Posterior cingulate gyrus (tissue), 11 donors: ENCODE measurements at regions of chr7 and their contacts with region 1.

Region 1: GRCh38 chr7:33062782-33063443 is 337 bp upstream of the NT5C3A start:
- DNase-seq: peak; percentile 88 to 99 (median 92)

Region 2: DNA sequence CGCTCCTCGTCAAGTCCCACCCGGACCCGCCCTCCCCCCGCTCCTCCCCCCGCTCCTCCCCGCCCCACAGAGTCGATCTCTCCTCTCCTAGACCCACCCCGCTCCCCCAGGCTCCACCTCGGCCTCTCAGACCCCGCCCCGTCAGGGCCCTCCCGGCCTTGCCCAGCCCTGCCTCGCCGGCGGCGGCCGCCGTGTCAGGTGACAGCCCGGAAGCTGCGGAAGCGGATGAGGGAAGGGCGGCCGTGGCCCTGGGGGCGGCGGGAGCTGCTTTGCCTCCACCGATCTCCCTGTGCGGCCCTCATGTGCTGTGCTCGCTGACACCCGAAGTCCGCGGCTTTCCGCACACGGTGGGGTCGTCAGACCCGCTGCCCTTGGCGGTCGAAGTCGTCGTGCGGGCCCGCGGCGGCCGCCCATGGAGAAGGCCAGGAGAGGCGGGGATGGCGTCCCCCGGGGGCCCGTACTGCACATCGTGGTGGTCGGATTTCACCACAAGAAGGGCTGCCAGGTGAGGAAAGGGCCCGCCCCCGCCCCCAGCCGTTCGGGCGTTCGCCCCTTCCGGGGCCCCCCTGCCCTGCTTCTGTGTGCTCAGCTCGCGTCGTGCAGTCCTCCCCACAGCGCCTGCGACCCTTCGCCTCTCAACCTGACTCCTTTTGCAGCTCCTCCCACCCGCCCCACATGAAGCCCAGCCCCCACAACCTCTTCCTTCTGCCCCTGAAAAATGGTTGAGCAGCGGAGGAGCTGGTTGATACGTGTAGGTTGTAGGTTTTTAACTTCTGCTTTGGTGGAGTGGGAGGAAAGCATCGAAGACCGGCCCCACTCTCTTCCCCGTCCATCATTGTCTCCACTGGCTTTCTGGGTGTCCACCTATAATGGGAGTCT is 567.4 kb before region 1 on chr7 and contains the start of gene AVL9:
- intact Hi-C with region 1: loop called (anchors 5 kb)
- DNase-seq: peak; percentile 94 to 100 (median 98)

Region 3: DNA sequence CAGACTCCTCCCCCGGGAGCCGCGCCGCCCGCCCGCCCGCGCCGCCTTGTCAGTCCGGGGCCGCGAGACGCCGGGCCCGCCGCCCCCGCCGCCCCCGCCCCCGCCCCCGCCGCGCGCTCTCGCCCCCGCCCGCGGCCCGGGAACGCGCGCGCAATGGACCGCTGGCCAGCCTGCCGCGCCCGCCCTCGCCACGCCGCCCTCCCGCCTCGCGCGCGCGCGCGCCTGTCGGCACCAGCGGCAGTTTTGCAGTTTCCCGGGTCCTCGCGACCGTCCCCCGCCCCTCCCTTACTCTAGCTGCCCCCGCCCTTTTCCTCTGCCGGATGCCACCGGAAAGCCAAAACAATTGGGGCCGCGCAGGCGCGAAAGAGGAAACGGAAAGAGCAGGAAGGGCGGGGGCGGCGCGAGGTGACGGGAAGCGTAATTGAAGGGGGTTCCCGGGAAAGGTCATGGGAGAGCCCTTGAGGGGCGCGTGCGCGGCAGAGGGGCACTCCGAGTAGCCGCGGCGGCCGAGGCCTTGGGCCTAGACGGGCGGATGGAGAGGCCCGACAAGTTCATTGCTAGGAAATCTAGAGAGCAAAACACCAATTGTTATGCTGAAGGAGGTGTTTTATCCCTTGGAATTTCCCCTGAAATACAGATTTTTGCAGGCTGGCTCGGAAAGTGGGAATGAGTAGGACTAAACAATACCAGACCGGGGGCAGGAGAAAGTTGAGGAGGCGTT is 171.0 kb before region 1 on chr7:
- intact Hi-C with region 1: loop called (anchors 5 kb)
- DNase-seq: peak; percentile 93 to 99 (median 94)

Region 4: GRCh38 chr7:32942786-32943653 is 119.9 kb before region 1 on chr7:
- intact Hi-C with region 1: loop called (anchors 2 kb)
- DNase-seq: peak; percentile 68 to 97 (median 78)

Region 5: DNA sequence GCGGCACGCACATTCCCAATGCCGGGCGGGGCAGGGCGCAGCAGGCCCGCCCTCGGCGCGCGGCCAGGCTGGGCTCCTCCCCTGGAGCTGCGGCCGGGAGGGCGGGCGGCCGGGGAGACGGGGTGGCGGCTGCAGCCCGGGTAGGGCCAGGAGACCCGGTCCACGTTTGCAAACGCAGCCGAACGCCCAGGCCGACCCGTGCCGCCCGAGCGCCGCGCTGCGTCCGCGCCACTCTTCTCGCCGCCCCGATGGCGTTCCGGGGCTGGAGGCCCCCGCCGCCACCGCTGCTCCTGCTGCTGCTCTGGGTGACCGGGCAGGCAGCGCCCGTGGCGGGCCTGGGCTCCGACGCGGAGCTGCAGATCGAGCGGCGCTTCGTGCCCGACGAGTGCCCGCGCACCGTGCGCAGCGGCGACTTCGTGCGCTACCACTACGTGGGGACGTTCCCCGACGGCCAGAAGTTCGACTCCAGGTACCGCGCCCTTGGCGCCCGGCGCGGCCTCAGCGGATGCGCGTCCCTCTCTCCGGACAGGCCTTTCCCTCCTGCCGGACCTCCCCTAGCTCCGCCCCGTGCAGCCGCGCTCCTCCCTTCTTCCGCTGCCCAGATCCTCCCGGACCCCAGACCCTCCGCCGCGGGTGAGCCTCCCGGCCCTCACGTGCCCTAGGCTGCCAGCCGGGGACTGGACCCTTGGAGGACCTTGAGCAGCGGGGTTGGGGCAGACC is 105.4 kb before region 1 on chr7 and contains the start of gene FKBP9:
- intact Hi-C with region 1: loop called (anchors 5 kb)
- DNase-seq: peak; percentile 51 to 96 (median 70)

Region 6: DNA sequence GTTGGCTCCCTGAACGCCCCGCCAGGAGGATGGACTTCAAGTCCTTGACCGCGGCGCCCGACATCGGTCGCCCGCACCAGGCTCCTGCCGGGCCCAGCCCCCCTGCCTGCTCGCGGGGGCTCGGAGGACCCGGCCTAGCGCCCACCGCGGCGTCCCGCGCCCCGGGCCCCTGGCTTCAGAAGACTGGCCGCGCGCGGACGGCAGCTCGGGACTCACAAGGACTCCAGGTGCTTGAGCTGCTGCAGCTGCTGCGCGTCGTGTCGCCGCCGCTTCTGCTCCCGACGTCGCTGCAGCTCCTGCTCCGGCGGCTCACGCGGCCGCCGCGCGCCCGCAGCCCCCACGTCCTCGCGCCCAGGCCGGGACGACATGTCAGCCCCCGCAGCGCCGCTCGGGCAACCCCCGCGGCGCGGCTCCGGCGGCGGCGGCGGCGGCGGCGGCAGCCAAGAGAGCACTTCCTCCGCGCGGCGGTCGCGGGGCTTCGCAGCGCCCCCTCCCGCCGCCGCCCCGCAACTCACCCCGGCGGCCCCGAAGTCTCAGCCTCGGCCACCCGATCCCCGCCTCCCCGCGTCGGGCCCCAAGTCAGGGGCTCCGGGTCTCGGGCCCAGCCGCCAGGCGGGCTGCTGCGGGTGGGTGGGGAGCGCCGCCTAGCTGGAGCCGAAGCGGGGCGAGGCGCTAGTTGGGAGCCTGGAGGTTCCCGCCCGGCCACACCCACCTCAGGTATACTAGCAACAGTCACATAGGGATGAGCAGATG is 46.3 kb after region 1 on chr7 and contains the start of gene RP9:
- intact Hi-C with region 1: loop called (anchors 2 kb)
- DNase-seq: peak; percentile 40 to 95 (median 63)